Common myeloid progenitor, CD34-positive (primary cell): ENCODE measurements at regions of chr11 and their contacts with region 1.

Region 1: DNA sequence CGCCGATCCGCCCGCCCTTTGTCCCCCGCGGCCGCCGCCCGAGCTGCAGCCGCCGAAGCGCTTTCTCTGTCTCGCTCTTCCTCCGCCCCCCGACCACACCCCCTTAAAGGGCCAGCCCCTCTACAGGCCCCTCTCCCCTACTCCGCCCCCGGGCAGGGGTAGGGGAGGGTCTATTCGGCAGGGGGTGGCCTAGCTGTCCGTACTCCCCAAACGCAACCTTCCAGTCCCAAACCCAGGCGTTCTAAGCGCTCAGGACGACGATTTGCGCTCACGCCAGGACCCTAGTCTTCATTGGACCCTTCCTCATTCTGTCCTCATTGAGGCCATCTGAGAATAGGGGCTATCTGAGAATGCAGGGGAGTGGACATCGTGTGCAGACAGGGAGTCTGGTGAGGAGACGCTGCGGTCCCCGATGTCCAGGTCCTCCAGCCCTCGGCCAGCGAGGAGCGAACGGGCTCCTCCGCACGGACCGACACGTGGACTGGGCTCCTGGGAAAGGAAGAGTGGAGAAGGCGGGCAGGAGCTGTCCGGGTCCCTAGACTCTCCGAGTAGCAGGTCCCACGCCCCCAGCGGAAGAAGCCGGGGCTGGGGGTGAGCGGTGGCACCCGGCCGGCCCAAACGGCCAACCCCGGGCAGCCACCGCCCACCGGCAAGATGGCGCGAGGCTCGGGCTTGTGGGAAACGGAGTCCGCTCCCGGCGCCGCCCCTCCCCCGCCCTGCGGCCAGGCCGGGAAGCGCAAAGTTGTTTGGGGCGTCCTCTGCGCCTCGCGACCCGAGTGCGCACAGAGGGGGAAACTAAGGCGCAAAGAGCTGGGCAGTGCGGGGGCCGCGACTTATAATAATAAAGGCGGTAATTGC is at the start of gene PPP1R14B:
- DNase-seq: peak; percentile 73 to 87 (median 83)
- H3K4me3 ChIP-seq: peak within 1 kb of the TSS; percentile 52 to 98 (median 86)
- H3K27ac ChIP-seq: peak within 1 kb of the TSS in 1 of 2 experiments; percentile 75
- H3K4me1 ChIP-seq: peaks cover 2 to 79% (median 78%) of the 10 kb centered on the region in 4 experiments
- H3K27me3 ChIP-seq: no peaks in the 10 kb centered on the region

Region 2: DNA sequence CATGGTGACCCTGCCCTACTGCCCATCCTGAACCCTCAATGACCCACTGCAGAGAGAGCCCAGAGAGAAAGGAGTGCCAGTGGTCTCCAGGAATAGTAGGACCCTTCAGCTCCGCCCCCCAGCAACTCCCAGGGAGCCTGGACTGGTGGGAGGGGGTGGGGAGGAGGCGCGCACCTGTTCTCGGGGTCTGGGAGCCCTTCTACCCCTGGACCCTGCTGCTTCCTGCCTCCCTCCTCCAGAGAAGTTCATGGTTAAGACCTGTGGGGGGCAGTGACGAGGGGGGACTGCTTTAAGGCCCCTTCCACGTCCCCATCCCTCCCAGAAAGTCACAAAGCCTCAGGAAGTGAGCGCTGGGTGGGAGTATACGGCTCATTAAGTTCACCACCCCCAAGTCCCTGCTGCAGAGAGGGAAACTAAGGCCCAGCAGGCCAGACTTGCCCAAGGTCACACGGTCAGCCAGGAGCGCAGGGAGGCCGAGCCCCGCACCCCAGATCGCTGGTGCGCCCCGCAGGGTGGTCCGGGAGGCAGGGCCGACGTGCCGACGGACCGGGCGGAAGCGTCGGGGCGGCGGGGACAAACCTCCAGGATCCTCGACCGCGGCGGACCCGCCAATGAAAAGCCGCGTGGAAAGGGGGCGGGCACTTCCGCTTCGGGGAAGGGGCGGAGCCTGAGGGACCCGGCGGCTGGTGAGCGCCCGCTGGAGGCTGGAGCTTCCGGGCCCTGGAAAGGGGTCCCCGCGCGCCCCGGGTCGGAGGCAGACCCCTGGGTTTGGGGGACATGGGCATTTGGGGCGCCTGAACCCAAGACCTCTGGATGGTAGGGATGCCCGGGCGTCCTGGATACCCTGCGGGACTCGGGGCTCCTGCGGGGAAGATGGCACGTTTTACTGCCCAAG is 21.2 kb before region 1 on chr11 and contains the starts of genes NUDT22 and TRPT1:
- CTCF ChIA-PET with region 1: interaction called, 17 read pairs
- POLR2A ChIA-PET with region 1: interaction called, 4 read pairs
- DNase-seq: peak; percentile 78 to 89 (median 85)
- H3K4me3 ChIP-seq: peak within 1 kb of the TSS; percentile 35 to 93 (median 77)
- H3K27ac ChIP-seq: peak within 1 kb of the TSS; percentile 33 to 87
- H3K4me1 ChIP-seq: peaks cover 0 to 48% (median 40%) of the 10 kb centered on the region in 4 experiments
- H3K27me3 ChIP-seq: no peaks in the 10 kb centered on the region

Region 3: DNA sequence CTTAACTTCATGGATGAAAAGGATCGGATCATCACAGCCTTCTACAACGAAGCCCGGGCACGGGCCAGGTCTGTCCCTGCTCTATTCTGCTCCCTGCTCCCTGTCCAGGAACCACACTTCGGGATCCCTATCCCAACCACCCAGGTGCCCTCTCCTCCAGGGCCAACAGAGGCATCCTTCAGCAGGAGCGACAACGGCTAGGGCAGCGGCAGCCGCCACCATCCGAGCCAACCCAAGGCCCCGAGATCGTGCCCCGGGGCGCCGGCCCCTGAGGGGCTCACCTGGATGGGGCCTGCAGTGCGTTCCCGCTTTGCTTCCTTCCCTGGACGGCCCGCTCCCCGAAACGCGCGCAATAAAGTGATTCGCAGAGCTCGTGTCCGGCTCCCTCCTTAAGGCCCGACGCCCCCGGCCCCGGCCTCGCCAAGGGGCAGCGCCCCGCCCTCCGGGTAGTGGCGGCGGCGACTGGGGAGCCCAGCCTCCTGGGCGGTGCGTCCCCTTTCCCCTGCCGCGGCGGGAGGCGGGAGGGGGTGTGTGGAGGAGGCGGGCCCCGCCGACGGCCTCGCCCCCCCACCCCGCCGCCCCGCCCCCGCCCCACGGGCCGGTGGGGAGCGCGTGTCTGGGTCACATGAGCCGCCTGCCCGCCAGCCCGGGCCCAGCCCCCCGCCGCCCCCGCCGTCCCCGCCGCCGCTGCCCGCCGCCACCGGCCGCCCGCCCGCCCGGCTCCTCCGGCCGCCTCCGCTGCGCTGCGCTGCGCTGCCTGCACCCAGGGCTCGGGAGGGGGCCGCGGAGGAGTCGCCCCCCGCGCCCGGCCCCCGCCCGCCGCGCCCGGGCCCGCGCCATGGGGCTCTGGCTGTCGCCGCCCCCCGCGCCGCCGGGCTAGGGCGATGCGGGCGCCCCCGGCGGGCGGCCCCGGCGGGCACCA is 12.9 kb before region 1 on chr11 and contains the start of gene VEGFB:
- CTCF ChIA-PET with region 1: interaction called, 13 read pairs
- POLR2A ChIA-PET with region 1: interaction called, 4 read pairs
- DNase-seq: peak in 2 of 3 donors; percentile 54 to 60
- H3K4me3 ChIP-seq: peak within 1 kb of the TSS; percentile 29 to 84 (median 70)
- H3K27ac ChIP-seq: peak within 1 kb of the TSS in 1 of 2 experiments; percentile 58
- H3K4me1 ChIP-seq: peaks cover 0 to 43% (median 41%) of the 10 kb centered on the region in 4 experiments
- H3K27me3 ChIP-seq: no peaks in the 10 kb centered on the region

Region 4: GRCh38 chr11:64263021-64263946 is 16.2 kb after region 1 on chr11:
- CTCF ChIA-PET with region 1: interaction called, 106 read pairs
- POLR2A ChIA-PET with region 1: interaction called, 4 read pairs
- DNase-seq: no peak
- H3K4me3 ChIP-seq: no peak overlapping the region
- H3K27ac ChIP-seq: no peak overlapping the region
- H3K4me1 ChIP-seq: peaks cover 0 to 14% (median 13%) of the 10 kb centered on the region in 4 experiments
- H3K27me3 ChIP-seq: no peaks in the 10 kb centered on the region

Region 5: DNA sequence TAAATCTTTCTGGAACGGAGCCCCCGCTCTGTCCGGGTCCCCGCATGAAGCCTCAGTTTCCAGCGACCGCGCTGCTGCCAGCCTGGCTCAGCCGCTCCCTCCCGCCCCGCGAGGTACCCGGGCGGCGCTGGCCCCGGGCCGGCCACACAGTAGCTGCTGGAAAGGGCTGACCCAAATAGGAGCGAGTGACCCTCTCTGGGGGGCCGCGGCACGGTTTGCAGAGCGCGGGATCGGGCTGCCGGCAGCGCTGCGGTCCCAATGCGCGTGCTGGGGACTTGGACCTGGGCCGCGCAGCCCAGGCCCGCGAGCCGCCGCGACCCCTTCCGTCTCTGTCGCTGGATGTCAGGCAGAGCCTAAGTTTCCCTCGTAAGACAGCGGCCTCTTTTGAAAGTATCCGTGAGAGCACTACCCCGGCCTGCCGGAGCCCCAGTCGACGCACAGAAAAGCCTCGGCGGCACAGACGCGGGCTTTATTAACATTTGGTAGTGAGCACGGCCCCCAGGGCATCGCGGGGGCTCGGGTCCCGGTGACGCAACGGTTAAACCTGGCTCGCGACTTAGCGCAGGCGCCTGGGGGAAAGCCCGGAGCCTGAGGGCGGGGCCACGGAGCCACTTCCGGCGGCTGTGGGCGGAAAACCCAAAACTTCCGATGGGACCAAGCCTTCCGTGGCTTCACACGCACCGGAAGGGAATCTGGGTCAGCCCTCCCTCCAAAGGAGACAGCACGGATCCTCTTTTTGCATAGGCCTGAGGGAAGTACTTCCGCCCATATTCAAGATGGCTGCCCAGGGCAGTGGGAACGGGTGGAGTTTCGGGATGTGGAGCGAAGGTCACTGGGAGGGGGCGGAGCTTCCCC is 22.5 kb after region 1 on chr11:
- CTCF ChIA-PET with region 1: interaction called, 106 read pairs
- POLR2A ChIA-PET with region 1: interaction called, 10 read pairs
- DNase-seq: peak; percentile 98 to 99 (median 99)
- H3K4me3 ChIP-seq: peak overlapping the region; percentile 76 to 94 (median 86)
- H3K27ac ChIP-seq: peak overlapping the region; percentile 88 to 96
- H3K4me1 ChIP-seq: peaks cover 4 to 51% (median 41%) of the 10 kb centered on the region in 4 experiments
- H3K27me3 ChIP-seq: no peaks in the 10 kb centered on the region